Naive thymus-derived CD4-positive, alpha-beta T cell (primary cell): ENCODE measurements at regions of chr4 and their contacts with region 1.

Region 1: GRCh38 chr4:168480931-168481611 is 779 bp upstream of the DDX60L start:
- DNase-seq: peak in 8 of 9 donors; percentile 22 to 85 (median 78)
- ATAC-seq: peak; percentile 75
- H3K4me3 ChIP-seq: peak overlapping the region; percentile 72
- H3K4me3 Mint-ChIP-seq: peak overlapping the region; percentile 88 to 100 (median 98)
- H3K27ac ChIP-seq: peak overlapping the region; percentile 95
- H3K27ac Mint-ChIP-seq: peak overlapping the region; percentile 98 to 100 (median 99)
- H3K4me1 ChIP-seq: peaks cover 20 to 33% of the 10 kb centered on the region in 2 donors
- H3K4me1 Mint-ChIP-seq: peaks cover 46 to 82% (median 74%) of the 10 kb centered on the region in 7 donors
- H3K27me3 ChIP-seq: no peaks in the 10 kb centered on the region
- H3K27me3 Mint-ChIP-seq: no peaks in the 10 kb centered on the region

Region 2: GRCh38 chr4:168076989-168077725 is 403.9 kb before region 1 on chr4:
- CTCF ChIA-PET with region 1: no interaction called
- POLR2A ChIA-PET with region 1: no interaction called
- intact Hi-C with region 1: no loop called
- DNase-seq: peak in 3 of 9 donors; percentile 9 to 32 (median 13)
- ATAC-seq: no peak
- H3K4me3 ChIP-seq: no peak overlapping the region
- H3K4me3 Mint-ChIP-seq: no peak overlapping the region
- H3K27ac ChIP-seq: no peak overlapping the region
- H3K27ac Mint-ChIP-seq: no peak overlapping the region
- H3K4me1 ChIP-seq: no peaks in the 10 kb centered on the region
- H3K4me1 Mint-ChIP-seq: no peaks in the 10 kb centered on the region
- H3K27me3 ChIP-seq: no peaks in the 10 kb centered on the region
- H3K27me3 Mint-ChIP-seq: peaks cover 0 to 7% (median under 1%) of the 10 kb centered on the region in 5 donors

Region 3: DNA sequence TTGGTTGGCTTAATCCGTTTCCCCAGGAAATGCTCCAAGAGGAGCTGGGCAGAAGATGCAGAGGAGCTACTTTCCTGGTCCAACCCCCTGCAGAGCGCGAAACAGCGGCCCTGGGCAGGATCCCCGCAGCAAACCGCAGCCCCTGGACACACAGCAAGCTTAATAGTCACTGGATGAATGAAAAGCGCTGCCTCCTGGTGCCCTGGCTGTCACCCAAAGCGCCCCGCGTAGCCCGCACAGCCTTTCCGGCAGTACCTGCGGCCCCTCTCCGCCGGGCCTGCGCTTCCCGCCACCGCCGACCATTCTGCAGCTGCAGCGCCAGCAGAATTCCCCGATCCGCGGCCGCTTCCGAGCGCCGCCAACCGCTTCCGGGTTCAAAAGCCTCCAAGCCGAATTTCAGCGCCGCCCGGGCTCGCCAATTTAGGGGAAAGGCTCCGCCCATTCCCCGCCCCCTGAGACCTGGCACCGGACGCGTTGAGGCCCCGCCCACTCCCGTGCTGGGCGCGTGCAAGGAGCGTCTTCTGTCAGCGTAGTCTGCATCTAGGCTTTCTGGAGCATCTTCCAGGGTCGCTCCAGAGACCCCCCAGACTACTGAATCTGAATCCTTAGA is 1276.6 kb after region 1 on chr4 and contains the start of gene HPF1:
- CTCF ChIA-PET with region 1: no interaction called
- POLR2A ChIA-PET with region 1: no interaction called
- intact Hi-C with region 1: loop called in 1 of 2 experiments (anchors 1 kb)
- DNase-seq: peak; percentile 84 to 93 (median 89)
- ATAC-seq: peak; percentile 98
- H3K4me3 ChIP-seq: peak within 1 kb of the TSS; percentile 83
- H3K4me3 Mint-ChIP-seq: peak within 1 kb of the TSS; percentile 82 to 92 (median 88)
- H3K27ac ChIP-seq: peak within 1 kb of the TSS; percentile 66
- H3K27ac Mint-ChIP-seq: peak within 1 kb of the TSS; percentile 52 to 81 (median 71)
- H3K4me1 ChIP-seq: peaks cover 0 to 7% of the 10 kb centered on the region in 2 donors
- H3K4me1 Mint-ChIP-seq: peaks cover 19 to 38% (median 30%) of the 10 kb centered on the region in 7 donors
- H3K27me3 ChIP-seq: no peaks in the 10 kb centered on the region
- H3K27me3 Mint-ChIP-seq: peaks cover 0 to 22% (median 0%) of the 10 kb centered on the region in 5 donors
- total RNA-seq, gene HPF1: 9.9 to 23.5 (median 13.8) TPM